ENCODE measurements at regions of chr5 and their contacts with region 1.

Region 1: GRCh38 chr5:133111299-133111698 is 59.5 kb downstream of the HSPA4 start:
- DNase-seq: peak in 1 of 2 donors; percentile 91
- H3K4me3 ChIP-seq: no peak overlapping the region
- H3K27ac ChIP-seq: peak overlapping the region; percentile 31 to 82
- H3K4me1 ChIP-seq: peaks cover 0 to 20% of the 10 kb centered on the region in 2 donors
- H3K27me3 ChIP-seq: no peaks in the 10 kb centered on the region
- CTCF ChIP-seq: peak; percentile 88 to 91 (median 89)

Region 2: DNA sequence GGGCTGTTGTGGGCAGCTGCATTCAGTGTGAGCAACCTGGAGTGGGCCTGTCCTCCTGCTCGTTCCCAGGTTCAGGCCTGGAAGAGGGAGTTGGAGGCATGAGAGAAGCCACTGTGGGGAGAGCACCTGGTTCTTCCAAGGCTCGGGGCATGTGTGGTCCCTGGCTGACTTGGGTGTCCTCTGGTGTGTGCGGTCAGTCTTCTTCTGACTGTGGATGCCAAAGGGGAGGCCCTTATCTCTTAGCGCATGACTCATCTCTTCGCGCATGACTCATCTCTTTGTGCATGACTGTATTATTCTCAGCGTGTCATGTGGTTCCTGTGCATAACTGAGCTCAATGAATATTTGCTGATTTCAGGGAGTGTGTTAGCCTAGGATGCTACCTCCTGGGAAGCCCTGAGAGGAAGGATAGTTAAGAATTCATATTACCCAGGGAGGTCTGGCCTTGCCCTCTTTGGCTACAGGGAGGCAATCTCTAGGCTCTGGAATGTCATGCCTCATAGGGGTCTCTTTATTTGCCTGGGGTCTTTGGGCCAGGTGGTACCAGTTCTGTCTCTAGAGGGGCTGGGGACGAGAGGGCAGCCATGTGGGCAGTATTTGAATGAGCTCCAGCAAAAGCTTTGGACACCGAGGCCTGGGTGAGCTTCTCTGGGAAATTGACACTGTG is 129.3 kb after region 1 on chr5:
- intact Hi-C with region 1: loop called (anchors 10 kb)
- DNase-seq: peak in 1 of 2 donors; percentile 20
- H3K4me3 ChIP-seq: no peak overlapping the region
- H3K27ac ChIP-seq: no peak overlapping the region
- H3K4me1 ChIP-seq: no peaks in the 10 kb centered on the region
- H3K27me3 ChIP-seq: no peaks in the 10 kb centered on the region
- CTCF ChIP-seq: no peak

Region 3: DNA sequence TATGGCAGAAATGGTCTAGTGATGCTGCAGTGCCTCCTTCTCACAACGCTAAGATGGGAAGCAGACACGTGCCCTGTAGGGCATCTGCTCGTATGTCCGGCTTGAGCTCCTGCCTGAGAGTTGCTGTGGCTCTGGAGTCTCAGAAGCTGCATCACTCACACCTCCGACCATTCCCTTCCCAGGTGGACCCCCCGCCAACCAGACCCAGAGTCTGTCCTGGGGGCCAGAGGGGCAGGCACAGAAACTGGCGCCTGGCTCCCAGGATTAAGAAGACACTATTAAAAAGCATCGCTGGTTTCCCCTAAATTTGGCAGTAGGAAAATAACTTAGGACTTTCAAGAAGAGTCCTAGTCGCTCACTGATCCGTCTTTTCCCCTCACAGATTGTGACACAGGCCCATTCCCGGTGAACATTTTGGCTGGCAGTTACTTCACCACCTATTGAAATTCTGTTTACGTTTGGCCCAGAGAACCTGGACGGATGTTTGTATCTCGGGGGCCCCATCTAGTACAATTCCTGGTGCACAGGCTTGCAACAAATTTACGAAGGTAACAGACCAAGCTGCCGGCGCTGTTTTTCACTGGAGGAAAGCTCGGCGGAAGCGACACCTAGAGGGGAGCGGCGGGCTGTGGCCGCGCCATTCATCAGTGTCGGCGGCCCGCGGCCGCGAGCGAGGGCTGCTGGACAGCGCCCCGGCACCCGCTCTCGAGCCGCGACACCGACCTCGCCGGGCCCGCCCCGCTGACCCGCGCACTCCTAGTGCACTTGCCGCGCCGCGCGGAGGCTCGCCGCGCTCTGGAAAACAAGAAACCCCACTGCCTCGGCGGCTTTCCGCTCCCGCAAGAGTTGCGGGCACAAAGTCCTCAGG is 499.4 kb after region 1 on chr5:
- intact Hi-C with region 1: loop called (anchors 10 kb)
- DNase-seq: peak in 1 of 2 donors; percentile 67
- H3K4me3 ChIP-seq: peak overlapping the region; percentile 49 to 59
- H3K27ac ChIP-seq: no peak overlapping the region
- H3K4me1 ChIP-seq: peaks cover 12 to 13% of the 10 kb centered on the region in 2 donors
- H3K27me3 ChIP-seq: peaks cover 13% of the 10 kb centered on the region
- CTCF ChIP-seq: peak; percentile 15 to 43 (median 30)

Region 4: GRCh38 chr5:133868946-133869518 is 757.7 kb after region 1 on chr5:
- intact Hi-C with region 1: loop called (anchors 5 kb)
- DNase-seq: peak in 1 of 2 donors; percentile 82
- H3K4me3 ChIP-seq: peak overlapping the region; percentile 21 to 43
- H3K27ac ChIP-seq: no peak overlapping the region
- H3K4me1 ChIP-seq: no peaks in the 10 kb centered on the region
- H3K27me3 ChIP-seq: no peaks in the 10 kb centered on the region
- CTCF ChIP-seq: peak; percentile 54 to 92 (median 76)

Region 5: DNA sequence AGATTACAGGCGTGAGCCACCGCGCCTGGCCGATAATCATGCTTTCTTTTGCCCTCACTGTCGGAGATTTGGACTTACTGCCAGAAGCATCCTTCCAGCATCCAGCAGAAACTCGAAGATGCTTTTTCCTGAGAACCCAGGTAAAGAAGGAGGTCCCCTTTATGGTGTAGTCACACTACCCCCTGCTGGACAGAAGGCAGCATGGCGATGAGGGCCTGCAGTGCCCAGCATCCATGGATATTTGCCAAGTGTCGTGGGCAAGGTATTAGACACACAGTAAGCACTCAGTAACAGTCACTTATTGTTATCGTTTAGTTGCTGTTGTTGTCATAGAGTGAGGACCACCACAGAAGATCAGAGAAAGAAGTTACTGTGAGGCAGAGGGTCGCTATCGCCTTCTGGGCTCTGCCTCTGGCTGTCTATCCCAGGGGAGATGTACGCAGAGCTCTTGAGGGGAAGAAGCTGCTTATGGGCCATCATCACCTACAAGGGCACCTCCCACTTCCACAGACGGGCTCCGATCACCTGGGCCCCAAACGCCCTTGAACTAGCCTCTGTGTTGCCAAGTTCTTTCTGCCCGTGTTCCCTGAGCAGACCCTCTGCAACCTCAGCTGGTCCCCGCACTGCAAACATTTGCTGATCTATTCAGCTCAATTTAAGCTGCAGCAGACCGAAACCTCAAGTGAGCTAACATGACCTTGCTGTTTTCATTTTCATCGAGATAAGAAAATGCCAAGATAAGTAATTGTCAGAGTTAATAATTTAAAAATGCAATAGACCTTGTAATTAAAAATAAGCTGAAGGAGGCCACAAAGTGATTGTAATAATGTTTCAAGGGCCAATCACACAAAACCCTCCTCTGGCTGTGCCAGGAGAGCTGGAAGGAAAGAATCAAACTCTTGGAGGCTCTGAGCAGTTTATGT is 833.2 kb after region 1 on chr5:
- intact Hi-C with region 1: loop called (anchors 5 kb)
- DNase-seq: peak in 1 of 2 donors; percentile 75
- H3K4me3 ChIP-seq: no peak overlapping the region
- H3K27ac ChIP-seq: no peak overlapping the region
- H3K4me1 ChIP-seq: peaks cover 14 to 19% of the 10 kb centered on the region in 2 donors
- H3K27me3 ChIP-seq: no peaks in the 10 kb centered on the region
- CTCF ChIP-seq: peak; percentile 53 to 63 (median 55)

Measured in ascending aorta (tissue), 2 donors.